IMR-90 (cell line): ENCODE measurements at regions of chr18 and their contacts with region 1.

Region 1: DNA sequence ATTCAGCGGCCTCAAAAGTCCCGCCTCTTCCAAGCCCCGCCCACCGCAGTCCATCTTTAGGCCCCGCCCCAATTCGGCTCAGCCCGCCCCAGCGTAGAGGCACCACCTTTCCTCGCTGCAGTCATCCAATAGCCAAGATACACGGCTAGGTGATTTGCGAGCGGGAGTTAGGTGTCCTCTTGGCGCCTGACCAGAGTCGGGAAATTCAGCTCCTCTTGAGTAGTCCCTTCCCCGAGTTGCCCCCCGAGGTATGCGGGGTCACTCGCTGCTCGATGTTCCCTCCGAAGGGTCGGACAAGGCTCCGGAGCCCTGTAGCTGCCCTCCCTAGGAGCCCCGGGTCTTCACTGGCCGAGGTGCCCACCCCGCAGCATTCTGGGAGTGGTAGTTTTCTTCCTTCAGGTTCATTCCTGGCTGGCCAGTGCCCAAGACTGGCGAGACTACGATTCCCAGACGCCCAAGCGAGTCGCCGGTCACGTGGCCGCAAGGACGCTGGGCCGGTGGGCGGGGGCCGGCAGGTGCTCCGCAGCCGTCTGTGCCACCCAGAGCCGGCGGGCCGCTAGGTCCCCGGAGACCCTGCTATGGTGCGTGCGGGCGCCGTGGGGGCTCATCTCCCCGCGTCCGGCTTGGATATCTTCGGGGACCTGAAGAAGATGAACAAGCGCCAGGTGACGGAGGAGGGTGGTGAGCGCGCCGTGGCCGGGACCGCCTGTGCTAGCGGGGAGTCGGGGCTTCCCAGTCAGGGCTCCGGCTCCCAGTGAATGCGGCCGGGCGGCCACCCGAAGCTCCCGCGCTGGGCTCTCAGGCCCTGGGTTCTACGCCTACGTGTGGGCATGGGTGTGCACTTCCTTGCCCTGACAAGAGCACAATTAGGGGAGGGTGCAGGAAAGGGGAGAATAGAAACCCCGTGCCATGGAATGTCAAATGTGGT is at the start of gene SEC11C:
- DNase-seq: peak; percentile 94
- ATAC-seq: peak; percentile 96
- H3K4me3 ChIP-seq: peak within 1 kb of the TSS; percentile 78
- H3K27ac ChIP-seq: peak within 1 kb of the TSS; percentile 68
- H3K4me1 ChIP-seq: no peaks in the 10 kb centered on the region
- H3K27me3 ChIP-seq: peaks cover 11% of the 10 kb centered on the region
- CTCF ChIP-seq: no peak
- POLR2A ChIP-seq: no peak
- RAD21 ChIP-seq: no peak
- total RNA-seq, gene SEC11C: 8.9 and 10.6 TPM in 2 replicates

Region 2: GRCh38 chr18:58429442-58429841 is 710.2 kb before region 1 on chr18:
- CTCF ChIA-PET with region 1: no interaction called
- POLR2A ChIA-PET with region 1: no interaction called
- dilution Hi-C with region 1: no loop called
- in situ Hi-C with region 1: no loop called
- intact Hi-C with region 1: no loop called
- DNase-seq: no peak
- ATAC-seq: no peak
- H3K4me3 ChIP-seq: no peak overlapping the region
- H3K27ac ChIP-seq: no peak overlapping the region
- H3K4me1 ChIP-seq: no peaks in the 10 kb centered on the region
- H3K27me3 ChIP-seq: peaks cover 3% of the 10 kb centered on the region; the same call in 1 of the 2 replicates
- CTCF ChIP-seq: no peak
- POLR2A ChIP-seq: no peak
- RAD21 ChIP-seq: no peak

Region 3: DNA sequence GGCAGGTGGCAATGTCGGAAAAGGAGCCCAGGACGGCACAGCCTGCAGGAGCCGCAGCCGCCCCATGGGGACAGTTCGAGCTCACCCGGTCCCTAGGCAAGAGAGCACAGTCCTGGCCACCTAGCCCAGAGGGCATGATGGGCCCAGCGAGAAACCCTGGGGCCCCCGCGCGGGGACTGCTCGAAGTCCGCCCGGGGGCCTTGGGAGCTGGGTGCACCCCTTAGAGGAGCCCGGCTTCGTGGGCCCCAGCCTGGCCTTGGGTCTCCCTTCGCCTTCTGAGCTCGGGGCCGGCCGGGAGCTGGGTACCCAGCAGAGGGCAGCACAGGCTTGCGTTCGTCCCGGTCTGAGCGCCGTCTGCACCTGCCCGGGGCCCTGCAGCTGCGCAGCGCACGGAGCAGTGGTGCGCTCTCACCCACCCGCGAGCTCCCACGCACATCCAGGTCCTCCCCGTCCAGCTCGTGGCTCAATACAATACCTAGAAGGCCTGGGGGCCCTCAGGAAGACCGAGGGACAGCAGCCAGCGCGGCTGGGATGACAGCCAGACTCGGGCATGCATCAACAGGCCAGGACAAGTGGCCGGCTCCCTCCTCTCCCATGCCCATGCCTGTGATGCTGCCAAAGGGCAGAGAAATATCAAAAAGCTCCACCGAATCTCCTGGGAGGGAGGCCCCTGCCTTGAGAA is 371.2 kb before region 1 on chr18:
- CTCF ChIA-PET with region 1: no interaction called
- POLR2A ChIA-PET with region 1: no interaction called
- dilution Hi-C with region 1: no loop called
- in situ Hi-C with region 1: no loop called
- intact Hi-C with region 1: no loop called
- DNase-seq: peak; percentile 48
- ATAC-seq: peak; percentile 92
- H3K4me3 ChIP-seq: 0 out of 2 replicates have a peak overlapping the region, but pooled peaks have one; percentile 20
- H3K27ac ChIP-seq: no peak overlapping the region
- H3K4me1 ChIP-seq: peaks cover 4% of the 10 kb centered on the region; the same call in 1 of the 2 replicates
- H3K27me3 ChIP-seq: peaks cover 28% of the 10 kb centered on the region
- CTCF ChIP-seq: peak; percentile 79
- POLR2A ChIP-seq: no peak
- RAD21 ChIP-seq: peak; percentile 87

Region 4: DNA sequence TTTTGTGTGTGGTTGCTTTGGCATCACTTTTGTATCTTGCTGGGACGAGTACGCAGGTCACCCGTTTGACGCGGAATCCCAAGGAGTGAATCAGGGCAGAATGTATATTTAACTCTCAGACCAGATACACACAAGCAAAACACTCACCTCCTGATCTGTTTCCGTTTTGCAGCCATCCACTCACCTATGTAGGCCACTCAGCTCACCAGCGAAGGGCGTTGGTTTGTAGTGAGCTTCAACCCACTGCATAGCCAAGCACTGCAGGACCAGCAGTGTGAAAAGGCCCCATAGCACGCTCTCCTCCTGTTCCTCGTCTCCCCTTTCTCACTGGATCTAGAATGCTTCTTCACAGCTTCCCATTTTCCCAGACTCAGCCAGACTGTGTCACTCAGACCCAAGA is 216.6 kb before region 1 on chr18:
- CTCF ChIA-PET with region 1: no interaction called
- POLR2A ChIA-PET with region 1: no interaction called
- dilution Hi-C with region 1: no loop called
- in situ Hi-C with region 1: no loop called
- intact Hi-C with region 1: no loop called
- DNase-seq: no peak
- ATAC-seq: no peak
- H3K4me3 ChIP-seq: no peak overlapping the region
- H3K27ac ChIP-seq: no peak overlapping the region
- H3K4me1 ChIP-seq: peaks cover 3% of the 10 kb centered on the region
- H3K27me3 ChIP-seq: no peaks in the 10 kb centered on the region
- CTCF ChIP-seq: no peak
- POLR2A ChIP-seq: no peak
- RAD21 ChIP-seq: no peak

Region 5: GRCh38 chr18:59272971-59273935 is 133.6 kb after region 1 on chr18 and contains the start of gene RAX:
- CTCF ChIA-PET with region 1: no interaction called
- POLR2A ChIA-PET with region 1: no interaction called
- dilution Hi-C with region 1: no loop called
- in situ Hi-C with region 1: no loop called
- intact Hi-C with region 1: loop called (anchors 5 kb)
- DNase-seq: no peak
- ATAC-seq: peak; percentile 49
- H3K4me3 ChIP-seq: no peak within 1 kb of the TSS; the same call in 1 of the 2 replicates
- H3K27ac ChIP-seq: no peak within 1 kb of the TSS
- H3K4me1 ChIP-seq: no peaks in the 10 kb centered on the region
- H3K27me3 ChIP-seq: peaks cover 93% of the 10 kb centered on the region
- CTCF ChIP-seq: peak; percentile 17; the same call in 1 of the 2 replicates
- POLR2A ChIP-seq: no peak
- RAD21 ChIP-seq: no peak
- total RNA-seq, gene RAX: not detected in 2 replicates